ENCODE measurements at regions of chr9 and their contacts with region 1.

Region 1: DNA sequence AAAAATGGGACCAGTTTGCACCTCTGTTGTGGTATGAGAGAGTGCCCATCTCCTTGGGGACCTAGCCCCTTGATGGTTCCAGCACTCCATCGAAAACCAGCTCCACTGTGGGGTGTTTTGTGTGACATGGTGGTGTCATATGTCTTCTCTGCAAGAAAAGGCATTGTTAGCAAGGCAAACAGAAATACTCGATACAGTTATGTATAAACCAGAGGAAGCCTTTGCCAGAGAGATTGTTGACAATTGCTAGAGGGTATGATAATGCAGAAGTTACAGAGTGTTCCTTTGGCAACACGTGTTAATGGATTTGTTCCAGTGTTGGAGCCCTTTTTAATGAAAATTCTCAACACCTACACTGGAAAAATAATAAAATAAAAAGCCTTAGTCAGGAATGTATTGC is 270.4 kb upstream of the DMRT1 start:
- DNase-seq: no peak
- ATAC-seq: peak in 7 of 8 donors; percentile 20 to 76 (median 56)
- H3K4me3 ChIP-seq: no peak overlapping the region
- H3K27ac ChIP-seq: peak overlapping the region; percentile 23 to 82 (median 72)
- H3K4me1 ChIP-seq: peaks cover 7 to 77% (median 35%) of the 10 kb centered on the region in 9 donors
- H3K27me3 ChIP-seq: no peaks in the 10 kb centered on the region
- CTCF ChIP-seq: no peak

Region 2: DNA sequence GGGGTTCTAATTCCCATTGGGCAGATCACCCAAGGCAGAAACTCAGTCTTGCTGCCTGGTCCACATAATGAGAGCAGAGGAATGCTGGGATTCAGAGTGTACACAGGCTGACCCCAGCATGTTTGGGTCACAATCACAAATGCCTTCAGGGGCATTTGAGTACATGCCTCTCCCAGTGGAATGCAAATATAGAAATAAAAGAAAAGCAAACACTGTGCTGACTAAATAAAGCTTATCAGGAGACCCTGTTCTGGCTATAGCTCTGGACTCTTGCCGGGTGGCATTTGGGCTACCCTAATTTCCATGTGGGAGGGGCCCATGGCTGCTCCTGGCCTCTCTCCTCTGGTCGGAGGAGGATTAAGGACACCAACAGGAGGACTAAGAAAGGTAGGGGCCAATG is 235.0 kb before region 1 on chr9:
- intact Hi-C with region 1: no loop called
- DNase-seq: no peak
- ATAC-seq: peak in 1 of 8 donors; percentile 25
- H3K4me3 ChIP-seq: no peak overlapping the region
- H3K27ac ChIP-seq: no peak overlapping the region
- H3K4me1 ChIP-seq: peaks cover 0 to 4% (median 0%) of the 10 kb centered on the region in 9 donors
- H3K27me3 ChIP-seq: peaks cover 0 to 14% (median 0%) of the 10 kb centered on the region in 7 donors
- CTCF ChIP-seq: no peak

Region 3: GRCh38 chr9:546797-547223 is 24.3 kb before region 1 on chr9:
- intact Hi-C with region 1: loop called in 1 of 10 experiments (anchors 2 kb)
- DNase-seq: peak in 1 of 2 donors; percentile 31
- ATAC-seq: peak; percentile 62 to 83 (median 77)
- H3K4me3 ChIP-seq: peak overlapping the region in 5 of 10 donors; percentile 23 to 34 (median 31)
- H3K27ac ChIP-seq: peak overlapping the region; percentile 8 to 80 (median 70)
- H3K4me1 ChIP-seq: peaks cover 0 to 64% (median 41%) of the 10 kb centered on the region in 9 donors
- H3K27me3 ChIP-seq: no peaks in the 10 kb centered on the region
- CTCF ChIP-seq: peak in 8 of 9 donors; percentile 30 to 65 (median 42)